ENCODE measurements at regions of chr2 and their contacts with region 1.

Region 1: GRCh38 chr2:112733456-112733855 is 12.6 kb downstream of the NT5DC4 start:
- ATAC-seq: peak in 2 of 8 experiments; percentile 65 to 94
- H3K4me3 ChIP-seq: no peak overlapping the region
- H3K27ac ChIP-seq: no peak overlapping the region
- H3K4me1 ChIP-seq: no peaks in the 10 kb centered on the region

Region 2: GRCh38 chr2:112626604-112627059 is 106.8 kb before region 1 on chr2:
- in situ Hi-C with region 1: loop called in 3 of 9 experiments (anchors 10 to 25 kb)
- ATAC-seq: peak; percentile 3 to 84 (median 69)
- H3K4me3 ChIP-seq: no peak overlapping the region
- H3K27ac ChIP-seq: no peak overlapping the region
- H3K4me1 ChIP-seq: peaks cover 3 to 6% of the 10 kb centered on the region in 2 donors